SK-N-SH (cell line): ENCODE measurements at regions of chr4 and their contacts with region 1.

Region 1: DNA sequence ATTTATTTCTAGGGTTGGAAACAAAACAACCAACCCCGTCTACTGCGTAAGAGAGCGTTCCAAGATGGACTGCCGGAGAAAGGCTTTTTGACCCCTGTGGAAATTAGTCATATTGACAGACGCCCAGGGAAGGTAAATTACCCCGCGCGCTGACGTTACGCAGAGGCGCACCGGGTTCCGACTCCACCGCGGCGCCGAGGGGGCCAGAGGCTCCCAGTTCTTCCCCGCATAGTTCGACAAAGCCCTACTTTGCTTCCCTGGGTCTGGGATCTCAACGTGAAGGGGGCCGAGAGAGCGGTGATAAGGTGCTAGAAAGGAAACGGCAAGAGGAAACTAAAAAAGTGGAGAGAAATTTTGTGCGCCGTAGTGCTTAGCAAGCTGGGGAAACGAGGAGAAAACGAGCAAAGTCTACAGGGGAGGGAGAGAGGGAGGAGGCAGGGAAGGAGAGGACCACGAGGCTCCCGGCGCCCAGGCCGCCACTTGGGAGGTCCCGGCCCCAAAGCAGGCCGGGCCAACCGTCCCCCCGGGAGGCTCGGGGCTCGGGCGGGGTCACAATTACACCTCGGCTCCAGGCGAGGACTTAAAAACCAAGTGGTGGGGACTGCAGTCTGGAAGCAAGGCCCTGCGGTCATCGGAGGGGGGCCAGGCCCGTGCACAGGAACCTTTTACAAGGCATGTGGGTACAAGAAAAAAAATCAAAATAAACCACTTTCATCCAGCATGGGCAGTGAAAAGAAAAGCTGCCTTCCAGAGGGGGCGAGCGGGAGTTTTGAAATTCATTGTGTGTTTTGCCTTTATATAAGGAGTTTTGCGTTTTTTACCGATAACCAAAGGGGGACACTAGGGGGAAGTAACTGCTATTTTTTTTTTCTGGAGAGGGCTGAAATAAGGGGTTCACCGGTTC is 13.2 kb downstream of the HAND2 start:
- DNase-seq: peak; percentile 70
- H3K4me3 ChIP-seq: peak overlapping the region; percentile 50 to 58
- H3K27ac ChIP-seq: peak overlapping the region; percentile 99
- H3K4me1 ChIP-seq: peaks cover 20 to 45% of the 10 kb centered on the region in 2 experiments
- H3K27me3 ChIP-seq: no peaks in the 10 kb centered on the region
- CTCF ChIP-seq: peak; percentile 29
- EP300 ChIP-seq: no peak
- RAD21 ChIP-seq: 0 out of 2 replicates have a peak, but pooled peaks have one; percentile 14

Region 2: GRCh38 chr4:173577963-173578362 is 61.1 kb after region 1 on chr4:
- CTCF ChIA-PET with region 1: no interaction called
- POLR2A ChIA-PET with region 1: no interaction called
- DNase-seq: no peak
- H3K4me3 ChIP-seq: no peak overlapping the region
- H3K27ac ChIP-seq: no peak overlapping the region
- H3K4me1 ChIP-seq: peaks cover 0 to 4% of the 10 kb centered on the region in 2 experiments; a peak in 2 of 4 replicates
- H3K27me3 ChIP-seq: no peaks in the 10 kb centered on the region
- CTCF ChIP-seq: no peak
- EP300 ChIP-seq: no peak
- RAD21 ChIP-seq: no peak

Region 3: DNA sequence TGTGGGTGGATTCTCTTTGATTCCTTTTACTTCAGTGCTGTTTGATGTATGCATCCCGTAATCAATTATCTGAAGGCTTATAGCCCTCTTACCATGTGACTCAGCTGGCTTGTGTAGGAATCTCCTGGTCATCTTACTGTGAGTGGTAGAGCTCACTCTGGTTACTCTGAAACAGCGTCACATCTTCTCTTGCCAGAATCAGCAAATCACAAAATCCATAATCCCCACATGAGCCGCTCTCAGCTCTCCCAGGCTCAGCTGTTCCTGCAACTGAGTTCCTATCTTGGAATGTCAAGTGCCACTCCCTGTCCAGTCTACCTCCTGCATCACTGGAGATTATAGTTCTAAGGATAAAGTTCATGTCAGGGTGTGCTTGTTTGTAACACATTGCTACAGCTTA is 488.5 kb after region 1 on chr4:
- CTCF ChIA-PET with region 1: interaction called, 3 read pairs
- POLR2A ChIA-PET with region 1: interaction called, 52 read pairs
- DNase-seq: no peak
- H3K4me3 ChIP-seq: no peak overlapping the region
- H3K27ac ChIP-seq: peak overlapping the region in 1 of 2 experiments; percentile 100; a peak in 2 of 4 replicates
- H3K4me1 ChIP-seq: peaks cover 5 to 27% of the 10 kb centered on the region in 2 experiments; a peak in 3 of 4 replicates
- H3K27me3 ChIP-seq: no peaks in the 10 kb centered on the region
- CTCF ChIP-seq: no peak
- EP300 ChIP-seq: peak in 1 of 2 experiments; percentile 22; a peak in 1 of 4 replicates
- RAD21 ChIP-seq: no peak